ENCODE measurements at regions of chr4 and their contacts with region 1.

Region 1: DNA sequence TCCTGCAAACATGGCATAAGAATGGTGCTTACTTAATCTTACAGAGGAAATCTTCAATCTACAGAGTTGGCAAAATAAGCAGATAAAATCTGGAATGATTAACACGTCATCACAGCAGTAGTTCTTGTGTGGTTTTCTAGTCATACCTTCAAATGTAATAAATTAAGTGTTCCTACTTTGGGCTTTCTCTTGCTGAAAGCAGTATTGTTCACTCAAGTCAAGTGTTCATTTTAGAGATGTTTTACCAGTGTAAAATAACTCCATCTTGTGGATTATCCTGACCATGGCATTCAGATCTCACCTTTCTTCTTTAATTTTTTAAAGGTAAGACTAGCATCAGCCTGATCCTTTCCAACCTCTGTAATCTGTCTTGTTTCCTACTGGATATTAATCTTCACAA is 72.9 kb downstream of the ADAMTS3 start:
- DNase-seq: no peak
- H3K4me3 ChIP-seq: no peak overlapping the region
- CTCF ChIP-seq: no peak

Region 2: GRCh38 chr4:72295966-72296557 is 200.1 kb before region 1 on chr4:
- CTCF ChIA-PET with region 1: interaction called, 21 read pairs
- POLR2A ChIA-PET with region 1: no interaction called
- DNase-seq: peak; percentile 16
- H3K4me3 ChIP-seq: no peak overlapping the region
- CTCF ChIP-seq: peak; percentile 56